ENCODE measurements at regions of chr19 and their contacts with region 1.

Region 1: DNA sequence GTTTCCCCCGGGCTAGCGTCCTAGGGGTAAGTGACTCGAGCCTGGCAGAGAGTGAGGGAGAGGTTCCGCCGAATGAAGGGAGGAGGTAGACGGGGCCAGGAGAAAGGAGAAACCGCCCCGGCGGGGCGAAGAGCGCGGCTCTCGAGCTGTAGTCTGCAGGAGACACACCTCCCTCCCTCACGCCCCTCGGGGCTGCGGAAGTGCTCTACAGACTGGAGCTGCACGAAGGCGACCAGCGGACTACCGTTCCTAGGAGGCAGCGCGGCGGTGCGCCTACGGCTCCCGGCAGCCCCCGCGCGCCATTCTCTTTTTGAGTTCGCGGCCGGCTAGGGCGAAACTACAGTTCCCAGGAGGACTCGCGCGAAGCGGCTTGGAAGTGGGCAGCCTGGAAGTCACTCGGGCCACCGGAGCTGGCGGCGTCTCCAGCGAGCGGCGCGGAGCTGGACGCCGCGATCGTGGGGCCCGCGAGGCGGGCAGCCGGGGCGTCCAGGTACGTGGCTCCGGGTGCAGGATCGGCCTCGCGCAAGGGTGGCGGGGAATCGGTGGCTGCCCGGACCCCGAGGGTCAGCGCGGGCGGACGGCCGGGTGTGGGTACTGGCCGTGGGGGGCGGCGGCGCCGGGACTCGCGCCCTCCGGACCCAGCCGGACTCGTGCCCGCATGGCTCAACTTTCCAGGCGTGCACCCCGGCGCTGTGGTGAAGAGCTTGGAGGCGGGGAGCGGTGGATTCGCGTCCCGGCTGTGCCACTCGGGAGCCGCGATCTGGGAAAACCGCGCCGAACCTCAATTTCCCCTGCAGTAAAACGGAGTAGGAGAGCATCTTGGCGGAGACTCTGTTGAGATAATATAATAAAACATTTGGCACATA is at the start of gene SIPA1L3:
- DNase-seq: peak; percentile 85 to 95
- ATAC-seq: peak; percentile 98 to 99 (median 98)
- H3K4me3 ChIP-seq: peak within 1 kb of the TSS; percentile 76
- H3K4me3 Mint-ChIP-seq: peak within 1 kb of the TSS; percentile 93
- H3K27ac ChIP-seq: no peak within 1 kb of the TSS
- H3K27ac Mint-ChIP-seq: peak within 1 kb of the TSS; percentile 18 to 87
- H3K4me1 ChIP-seq: peaks cover 22% of the 10 kb centered on the region
- H3K4me1 Mint-ChIP-seq: peaks cover 19 to 25% of the 10 kb centered on the region in 2 donors
- H3K27me3 ChIP-seq: no peaks in the 10 kb centered on the region
- H3K27me3 Mint-ChIP-seq: no peaks in the 10 kb centered on the region
- CTCF ChIP-seq: no peak
- total RNA-seq, gene SIPA1L3: 34.4 to 35.8 (median 35.4) TPM

Region 2: GRCh38 chr19:37885392-37885791 is 21.7 kb before region 1 on chr19:
- intact Hi-C with region 1: no loop called
- DNase-seq: no peak
- ATAC-seq: no peak
- H3K4me3 ChIP-seq: no peak overlapping the region
- H3K4me3 Mint-ChIP-seq: no peak overlapping the region
- H3K27ac ChIP-seq: no peak overlapping the region
- H3K27ac Mint-ChIP-seq: no peak overlapping the region
- H3K4me1 ChIP-seq: no peaks in the 10 kb centered on the region
- H3K4me1 Mint-ChIP-seq: no peaks in the 10 kb centered on the region
- H3K27me3 ChIP-seq: peaks cover 3% of the 10 kb centered on the region
- H3K27me3 Mint-ChIP-seq: no peaks in the 10 kb centered on the region
- CTCF ChIP-seq: no peak

Region 3: DNA sequence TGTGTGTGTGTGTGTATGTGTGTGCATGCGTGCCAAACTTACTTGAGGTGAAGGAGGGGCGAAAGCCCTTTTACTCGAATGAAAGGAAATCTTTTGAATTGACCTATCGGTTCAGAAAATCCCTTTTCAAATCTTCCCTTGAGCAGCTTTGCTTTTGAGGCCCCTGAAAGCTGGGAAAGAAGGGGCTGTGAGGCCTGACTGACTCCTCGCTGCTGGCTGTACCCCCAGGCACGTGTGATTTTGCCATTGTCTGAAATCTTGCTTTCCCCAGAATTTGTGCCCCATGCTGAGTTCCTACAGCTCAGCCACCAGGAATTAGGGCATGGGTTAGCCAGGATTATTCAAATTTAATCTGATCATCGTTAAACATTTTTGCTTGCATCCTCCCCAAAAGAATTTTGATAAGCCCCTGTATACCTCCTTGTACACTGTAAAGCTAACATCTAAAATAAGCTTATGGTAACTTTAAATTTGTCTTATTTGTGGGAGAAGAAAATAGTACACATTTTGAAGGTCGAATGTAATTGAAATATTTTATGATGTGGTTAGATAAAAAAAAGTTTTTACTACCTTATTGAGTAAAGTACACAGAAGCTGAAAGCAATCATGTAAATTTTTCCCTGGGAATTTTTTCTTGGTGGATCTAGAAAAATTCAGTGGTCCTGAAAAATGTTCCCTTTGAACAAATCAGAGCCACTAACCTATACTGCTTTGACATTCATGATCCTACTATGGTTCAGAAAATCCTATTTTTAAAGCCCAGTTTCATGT is 46.6 kb after region 1 on chr19:
- intact Hi-C with region 1: no loop called
- DNase-seq: no peak
- ATAC-seq: no peak
- H3K4me3 ChIP-seq: no peak overlapping the region
- H3K4me3 Mint-ChIP-seq: no peak overlapping the region
- H3K27ac ChIP-seq: no peak overlapping the region
- H3K27ac Mint-ChIP-seq: no peak overlapping the region
- H3K4me1 ChIP-seq: peaks cover 4% of the 10 kb centered on the region
- H3K4me1 Mint-ChIP-seq: peaks cover 6 to 10% of the 10 kb centered on the region in 2 donors
- H3K27me3 ChIP-seq: no peaks in the 10 kb centered on the region
- H3K27me3 Mint-ChIP-seq: no peaks in the 10 kb centered on the region
- CTCF ChIP-seq: no peak

Region 4: DNA sequence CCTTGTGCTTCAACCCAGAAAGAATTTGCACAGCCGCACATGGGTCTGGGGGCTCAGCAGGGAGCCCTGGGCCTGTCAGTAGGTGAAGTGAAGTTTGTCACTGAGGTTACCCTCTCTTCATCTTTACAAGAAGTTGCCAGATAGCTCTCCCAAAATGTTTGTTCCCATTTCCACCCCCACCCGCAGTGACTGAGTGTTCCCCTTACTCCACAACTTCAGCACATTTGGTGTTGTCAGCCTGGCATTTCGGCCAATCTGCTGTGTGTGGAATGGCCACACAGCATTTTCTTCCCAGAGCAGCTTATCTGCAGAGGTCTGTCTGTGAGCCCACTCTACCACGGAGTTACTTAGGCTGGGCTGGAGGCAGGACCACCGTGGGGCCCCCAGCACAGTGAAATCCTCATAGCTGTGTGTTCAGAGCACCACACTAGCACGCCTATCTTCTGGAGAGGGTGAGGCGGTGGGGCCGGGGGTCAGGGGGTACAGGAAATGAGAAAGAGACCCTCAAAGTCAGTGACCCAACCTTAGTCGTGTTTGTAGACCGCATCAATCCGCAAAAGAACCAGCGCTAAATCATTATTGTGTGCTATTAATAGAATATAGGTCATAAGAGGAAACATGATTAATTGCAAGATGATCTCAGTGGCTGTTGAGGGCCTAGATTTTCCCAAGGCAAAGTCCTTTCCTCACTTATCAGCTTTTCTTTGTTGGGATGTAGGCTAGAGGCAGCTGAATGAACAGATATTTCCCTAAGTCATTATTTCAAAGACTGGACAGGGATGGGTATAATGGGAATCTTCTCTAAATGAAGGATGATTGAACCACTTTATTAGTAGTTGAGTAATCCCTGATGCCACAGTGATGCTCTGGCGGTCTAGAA is 115.9 kb after region 1 on chr19:
- intact Hi-C with region 1: no loop called
- DNase-seq: no peak
- ATAC-seq: no peak
- H3K4me3 ChIP-seq: no peak overlapping the region
- H3K4me3 Mint-ChIP-seq: no peak overlapping the region
- H3K27ac ChIP-seq: no peak overlapping the region
- H3K27ac Mint-ChIP-seq: peak overlapping the region in 1 of 2 donors; percentile 30
- H3K4me1 ChIP-seq: peaks cover 10% of the 10 kb centered on the region
- H3K4me1 Mint-ChIP-seq: peaks cover 24 to 31% of the 10 kb centered on the region in 2 donors
- H3K27me3 ChIP-seq: no peaks in the 10 kb centered on the region
- H3K27me3 Mint-ChIP-seq: no peaks in the 10 kb centered on the region
- CTCF ChIP-seq: no peak

Region 5: GRCh38 chr19:38049105-38049649 is 142.1 kb after region 1 on chr19:
- intact Hi-C with region 1: loop called (anchors 2 kb)
- DNase-seq: peak; percentile 30 to 85
- ATAC-seq: peak; percentile 91 to 92 (median 92)
- H3K4me3 ChIP-seq: peak overlapping the region; percentile 16
- H3K4me3 Mint-ChIP-seq: peak overlapping the region; percentile 65
- H3K27ac ChIP-seq: peak overlapping the region; percentile 85
- H3K27ac Mint-ChIP-seq: peak overlapping the region; percentile 78 to 90
- H3K4me1 ChIP-seq: peaks cover 45% of the 10 kb centered on the region
- H3K4me1 Mint-ChIP-seq: peaks cover 30 to 41% of the 10 kb centered on the region in 2 donors
- H3K27me3 ChIP-seq: no peaks in the 10 kb centered on the region
- H3K27me3 Mint-ChIP-seq: no peaks in the 10 kb centered on the region
- CTCF ChIP-seq: no peak

Region 6: DNA sequence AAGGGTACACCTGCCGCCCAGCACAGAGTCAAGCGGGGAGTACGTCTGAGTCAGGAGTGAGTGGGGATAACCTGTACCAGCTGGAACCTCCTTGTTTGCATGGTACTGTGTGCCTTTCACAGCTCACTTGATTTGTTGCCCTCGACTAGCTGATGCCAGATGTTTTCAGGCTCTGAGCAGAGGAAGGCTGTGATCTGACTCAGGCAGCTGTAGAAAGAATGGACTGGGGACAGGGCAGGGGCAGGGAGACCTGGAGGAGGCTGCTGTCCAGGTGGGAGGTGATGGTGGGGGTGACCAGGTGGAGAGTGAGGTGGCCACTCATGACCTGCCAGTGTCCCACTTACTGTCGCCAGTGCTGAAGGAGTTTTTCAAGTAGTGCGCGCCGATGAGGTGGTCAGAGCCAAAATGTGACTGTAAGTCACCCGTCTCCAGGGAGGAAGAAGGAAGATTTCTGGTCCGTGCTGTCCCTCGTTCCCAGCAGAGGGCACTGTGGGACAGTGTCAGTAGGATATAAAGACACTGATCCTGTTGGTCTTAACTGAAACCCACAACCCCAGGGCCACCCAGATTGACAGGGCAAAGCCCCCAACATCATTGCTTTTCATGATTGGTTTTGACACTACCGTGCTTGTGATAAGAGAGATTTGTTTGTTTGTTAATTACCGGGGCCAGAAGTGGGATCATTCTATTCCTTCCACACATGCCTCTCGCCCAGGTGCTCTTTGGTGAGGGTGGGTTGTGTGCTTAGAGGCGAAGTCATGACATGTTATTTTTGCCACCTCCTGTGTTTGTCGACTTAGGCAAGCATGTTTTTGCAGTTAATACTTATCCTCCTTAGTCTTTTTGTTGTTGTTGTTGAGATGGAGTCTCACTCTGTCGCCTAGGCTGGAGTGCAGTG is 188.6 kb after region 1 on chr19:
- intact Hi-C with region 1: loop called (anchors 1 kb)
- DNase-seq: peak; percentile 26 to 68
- ATAC-seq: peak; percentile 70 to 74 (median 70)
- H3K4me3 ChIP-seq: no peak overlapping the region
- H3K4me3 Mint-ChIP-seq: no peak overlapping the region
- H3K27ac ChIP-seq: no peak overlapping the region
- H3K27ac Mint-ChIP-seq: peak overlapping the region in 1 of 2 donors; percentile 62
- H3K4me1 ChIP-seq: no peaks in the 10 kb centered on the region
- H3K4me1 Mint-ChIP-seq: peaks cover 5 to 9% of the 10 kb centered on the region in 2 donors
- H3K27me3 ChIP-seq: no peaks in the 10 kb centered on the region
- H3K27me3 Mint-ChIP-seq: no peaks in the 10 kb centered on the region
- CTCF ChIP-seq: peak; percentile 43

Region 7: DNA sequence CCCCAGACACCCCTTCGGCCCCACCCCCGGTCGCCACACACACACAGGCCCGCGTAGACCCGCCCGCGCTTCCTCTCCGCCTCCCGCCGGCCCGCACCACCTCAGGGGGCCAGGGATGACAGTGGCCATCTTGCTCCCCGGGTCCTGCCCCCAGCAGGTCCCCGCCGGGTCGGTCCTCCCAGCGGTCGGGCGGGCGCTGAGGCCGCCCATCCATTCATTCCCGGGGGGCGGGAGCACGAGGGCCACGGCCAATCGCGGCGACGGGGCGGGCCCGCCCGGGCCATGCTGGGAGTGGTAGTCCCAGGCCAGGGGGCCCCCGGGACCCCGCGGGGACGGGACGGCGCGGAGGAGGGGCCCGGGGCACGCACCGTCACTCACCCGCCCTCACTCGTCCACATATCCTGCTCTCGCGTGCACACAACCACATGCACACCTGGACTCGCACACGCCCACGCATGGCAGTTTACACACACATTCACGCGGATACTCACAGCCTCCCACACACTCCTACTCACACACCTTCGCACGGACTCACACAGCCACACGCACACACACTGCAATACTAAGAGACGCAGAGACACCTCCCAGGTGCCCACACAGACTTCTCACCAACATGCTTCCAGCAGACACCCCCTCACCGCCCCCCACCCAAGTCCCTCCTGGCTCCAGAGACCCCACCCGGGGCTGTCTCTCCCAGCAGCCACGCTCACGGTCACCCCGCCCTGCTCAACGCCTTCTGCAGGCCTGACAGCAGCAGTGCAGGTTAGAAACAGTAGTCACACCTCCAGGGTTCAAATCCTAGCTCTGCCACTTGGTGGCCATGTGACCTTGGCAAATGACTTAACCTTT is 317.1 kb after region 1 on chr19 and contains the start of gene DPF1:
- intact Hi-C with region 1: loop called (anchors 10 kb)
- DNase-seq: peak in 1 of 2 donors; percentile 55
- ATAC-seq: peak; percentile 40 to 67 (median 41)
- H3K4me3 ChIP-seq: no peak within 1 kb of the TSS
- H3K4me3 Mint-ChIP-seq: peak within 1 kb of the TSS; percentile 47
- H3K27ac ChIP-seq: no peak within 1 kb of the TSS
- H3K27ac Mint-ChIP-seq: no peak within 1 kb of the TSS
- H3K4me1 ChIP-seq: peaks cover 20% of the 10 kb centered on the region
- H3K4me1 Mint-ChIP-seq: peaks cover 12 to 32% of the 10 kb centered on the region in 2 donors
- H3K27me3 ChIP-seq: peaks cover 65% of the 10 kb centered on the region
- H3K27me3 Mint-ChIP-seq: peaks cover 52 to 57% of the 10 kb centered on the region in 2 donors
- CTCF ChIP-seq: no peak
- total RNA-seq, gene DPF1: not detected

Region 8: GRCh38 chr19:38315657-38316476 is 408.8 kb after region 1 on chr19 and contains the start of gene YIF1B:
- intact Hi-C with region 1: loop called (anchors 5 kb)
- DNase-seq: peak; percentile 95 to 97
- ATAC-seq: peak; percentile 89 to 96 (median 91)
- H3K4me3 ChIP-seq: peak within 1 kb of the TSS; percentile 82
- H3K4me3 Mint-ChIP-seq: peak within 1 kb of the TSS; percentile 89
- H3K27ac ChIP-seq: peak within 1 kb of the TSS; percentile 94
- H3K27ac Mint-ChIP-seq: peak within 1 kb of the TSS; percentile 76 to 82
- H3K4me1 ChIP-seq: peaks cover 51% of the 10 kb centered on the region
- H3K4me1 Mint-ChIP-seq: peaks cover 15 to 29% of the 10 kb centered on the region in 2 donors
- H3K27me3 ChIP-seq: no peaks in the 10 kb centered on the region
- H3K27me3 Mint-ChIP-seq: peaks cover 0 to 15% of the 10 kb centered on the region in 2 donors
- CTCF ChIP-seq: no peak
- total RNA-seq, gene YIF1B: 23.2 to 28.4 (median 24.1) TPM

Region 9: GRCh38 chr19:38374429-38375176 is 467.5 kb after region 1 on chr19 and contains the start of gene PSMD8:
- intact Hi-C with region 1: loop called (anchors 1 kb)
- DNase-seq: peak; percentile 97 to 99
- ATAC-seq: peak; percentile 95 to 99 (median 96)
- H3K4me3 ChIP-seq: peak within 1 kb of the TSS; percentile 68
- H3K4me3 Mint-ChIP-seq: peak within 1 kb of the TSS; percentile 100
- H3K27ac ChIP-seq: peak within 1 kb of the TSS; percentile 91
- H3K27ac Mint-ChIP-seq: peak within 1 kb of the TSS; percentile 99 to 100
- H3K4me1 ChIP-seq: peaks cover 26% of the 10 kb centered on the region
- H3K4me1 Mint-ChIP-seq: peaks cover 25 to 33% of the 10 kb centered on the region in 2 donors
- H3K27me3 ChIP-seq: no peaks in the 10 kb centered on the region
- H3K27me3 Mint-ChIP-seq: peaks cover 0 to 4% of the 10 kb centered on the region in 2 donors
- CTCF ChIP-seq: no peak
- total RNA-seq, gene PSMD8: 109 to 115 (median 109) TPM

Measured in natural killer cell (primary cell).